ENCODE measurements at regions of chr17 and their contacts with region 1.

Region 1: DNA sequence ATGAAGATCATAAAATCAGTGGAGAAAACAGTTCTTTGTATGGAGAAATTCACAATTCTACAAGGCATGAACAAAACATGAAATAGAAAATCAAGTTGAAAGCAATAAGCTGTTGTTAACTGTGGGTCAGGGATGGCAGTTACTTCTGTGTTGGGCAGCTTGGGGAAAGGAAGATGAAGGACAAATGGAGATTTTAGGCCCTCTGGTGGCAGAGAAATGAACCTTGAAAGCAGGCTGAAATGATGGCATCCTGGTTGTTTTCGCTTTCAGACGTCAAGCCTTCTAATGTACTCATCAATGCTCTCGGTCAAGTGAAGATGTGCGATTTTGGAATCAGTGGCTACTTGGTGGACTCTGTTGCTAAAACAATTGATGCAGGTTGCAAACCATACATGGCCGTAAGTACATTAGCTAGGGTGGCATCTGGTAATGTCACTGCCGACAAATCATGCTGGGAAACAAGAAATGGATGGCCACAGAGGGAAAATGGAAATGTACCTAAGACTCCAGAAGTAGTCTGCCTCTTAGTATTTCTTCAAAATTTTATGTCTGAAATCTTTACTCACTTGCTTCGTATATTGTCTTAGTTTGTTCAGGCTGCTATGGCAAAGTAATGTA is 108.9 kb downstream of the MAP2K6 start:
- DNase-seq: peak; percentile 28
- ATAC-seq: peak; percentile 76
- H3K4me3 ChIP-seq: no peak overlapping the region
- H3K27ac ChIP-seq: no peak overlapping the region
- H3K4me1 ChIP-seq: no peaks in the 10 kb centered on the region
- H3K27me3 ChIP-seq: no peaks in the 10 kb centered on the region
- CTCF ChIP-seq: peak; percentile 52 to 77 (median 73); a peak in 5 of 6 replicates
- POLR2A ChIP-seq: no peak
- RAD21 ChIP-seq: peak; percentile 69

Region 2: DNA sequence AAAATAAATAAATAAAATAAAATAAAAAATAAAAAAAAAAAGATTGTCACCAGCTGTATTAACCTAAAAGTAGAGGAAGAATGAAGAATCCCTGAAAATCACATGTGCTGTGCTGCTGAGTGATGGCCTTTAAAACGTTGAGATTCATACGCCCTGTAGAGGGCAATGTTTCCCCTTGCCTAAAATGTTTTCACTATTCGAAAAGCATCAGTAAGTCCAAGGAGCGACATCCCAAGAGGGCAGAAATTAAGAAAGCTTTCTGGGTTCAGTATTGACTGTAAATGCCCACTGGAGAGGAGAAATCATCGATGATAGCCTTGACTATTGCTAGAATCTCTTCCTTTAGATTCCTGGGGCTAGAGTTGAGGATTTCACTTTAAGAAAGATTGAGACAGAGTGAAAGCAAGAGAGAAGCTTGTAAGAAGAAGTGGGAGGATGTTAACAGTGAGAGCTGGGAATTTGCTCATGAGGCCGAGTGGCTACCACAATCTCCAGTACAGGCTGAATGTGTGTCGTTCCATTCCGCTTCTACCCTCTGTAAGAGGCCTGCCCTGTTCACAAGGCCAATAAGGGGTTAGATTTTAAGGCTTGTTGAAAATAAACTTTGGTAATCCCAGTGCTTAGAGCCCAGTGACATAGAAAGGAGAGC is 751.4 kb before region 1 on chr17:
- CTCF ChIA-PET with region 1: interaction called, 19 read pairs
- POLR2A ChIA-PET with region 1: no interaction called
- RAD21 ChIA-PET with region 1: no interaction called
- intact Hi-C with region 1: loop called (anchors 2 kb)
- DNase-seq: peak; percentile 62
- ATAC-seq: peak; percentile 67
- H3K4me3 ChIP-seq: peak overlapping the region; percentile 4 to 10; a peak in 1 of 4 replicates
- H3K27ac ChIP-seq: no peak overlapping the region
- H3K4me1 ChIP-seq: peaks cover 4 to 9% of the 10 kb centered on the region in 2 experiments; a peak in 3 of 4 replicates
- H3K27me3 ChIP-seq: no peaks in the 10 kb centered on the region
- CTCF ChIP-seq: peak; percentile 65 to 84 (median 78)
- POLR2A ChIP-seq: no peak
- RAD21 ChIP-seq: peak; percentile 77

Region 3: DNA sequence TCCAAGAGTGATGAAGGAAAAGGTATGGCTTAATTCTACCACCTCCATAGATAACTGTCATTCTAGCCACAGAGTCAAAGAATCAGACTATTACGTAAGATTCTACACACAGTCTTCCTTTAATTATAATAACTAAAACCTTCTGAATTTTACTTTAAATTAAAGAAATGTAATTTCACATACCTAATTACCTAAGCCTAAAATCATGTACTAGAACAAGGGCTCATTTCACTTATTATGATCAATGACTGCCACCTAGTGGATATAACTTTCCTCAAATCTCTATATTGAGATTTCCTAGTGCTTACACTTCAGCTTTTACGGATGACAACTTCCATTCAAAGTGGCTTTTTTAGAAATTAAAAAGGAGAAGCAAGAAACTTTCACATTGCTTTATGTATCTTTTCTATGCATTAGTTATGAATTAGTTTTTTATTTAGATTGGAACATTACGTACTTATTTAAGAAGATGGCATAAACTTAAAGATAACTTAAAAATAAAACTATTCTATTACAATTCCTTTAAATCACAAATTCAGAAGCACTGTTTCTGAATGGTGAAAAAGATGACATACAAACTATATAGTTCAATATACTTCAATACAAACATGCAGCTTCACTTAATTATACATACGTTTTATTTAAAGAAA is 276.5 kb before region 1 on chr17:
- CTCF ChIA-PET with region 1: interaction called, 12 read pairs
- POLR2A ChIA-PET with region 1: no interaction called
- RAD21 ChIA-PET with region 1: no interaction called
- intact Hi-C with region 1: loop called (anchors 5 kb)
- DNase-seq: peak; percentile 55
- ATAC-seq: peak; percentile 78
- H3K4me3 ChIP-seq: no peak overlapping the region
- H3K27ac ChIP-seq: no peak overlapping the region
- H3K4me1 ChIP-seq: no peaks in the 10 kb centered on the region
- H3K27me3 ChIP-seq: no peaks in the 10 kb centered on the region
- CTCF ChIP-seq: peak; percentile 53 to 83 (median 65)
- POLR2A ChIP-seq: no peak
- RAD21 ChIP-seq: peak; percentile 79

Region 4: GRCh38 chr17:69388822-69389442 is 134.4 kb before region 1 on chr17:
- CTCF ChIA-PET with region 1: interaction called, 15 read pairs
- POLR2A ChIA-PET with region 1: no interaction called
- RAD21 ChIA-PET with region 1: no interaction called
- intact Hi-C with region 1: no loop called
- DNase-seq: no peak
- ATAC-seq: no peak
- H3K4me3 ChIP-seq: no peak overlapping the region
- H3K27ac ChIP-seq: no peak overlapping the region
- H3K4me1 ChIP-seq: no peaks in the 10 kb centered on the region
- H3K27me3 ChIP-seq: no peaks in the 10 kb centered on the region
- CTCF ChIP-seq: no peak
- POLR2A ChIP-seq: no peak
- RAD21 ChIP-seq: no peak

Region 5: GRCh38 chr17:69499301-69499700 is 24.1 kb before region 1 on chr17:
- CTCF ChIA-PET with region 1: no interaction called
- POLR2A ChIA-PET with region 1: no interaction called
- RAD21 ChIA-PET with region 1: no interaction called
- intact Hi-C with region 1: no loop called
- DNase-seq: no peak
- ATAC-seq: no peak
- H3K4me3 ChIP-seq: no peak overlapping the region
- H3K27ac ChIP-seq: no peak overlapping the region
- H3K4me1 ChIP-seq: no peaks in the 10 kb centered on the region; a peak in 1 of 4 replicates
- H3K27me3 ChIP-seq: no peaks in the 10 kb centered on the region
- CTCF ChIP-seq: no peak
- POLR2A ChIP-seq: no peak
- RAD21 ChIP-seq: no peak

Region 6: GRCh38 chr17:69575346-69575761 is 52.0 kb after region 1 on chr17:
- CTCF ChIA-PET with region 1: interaction called, 18 read pairs
- POLR2A ChIA-PET with region 1: no interaction called
- RAD21 ChIA-PET with region 1: no interaction called
- intact Hi-C with region 1: no loop called
- DNase-seq: no peak
- ATAC-seq: no peak
- H3K4me3 ChIP-seq: no peak overlapping the region
- H3K27ac ChIP-seq: no peak overlapping the region
- H3K4me1 ChIP-seq: no peaks in the 10 kb centered on the region
- H3K27me3 ChIP-seq: peaks cover 8% of the 10 kb centered on the region
- CTCF ChIP-seq: no peak
- POLR2A ChIP-seq: no peak
- RAD21 ChIP-seq: no peak

Region 7: GRCh38 chr17:69696650-69697049 is 173.3 kb after region 1 on chr17:
- CTCF ChIA-PET with region 1: no interaction called
- POLR2A ChIA-PET with region 1: no interaction called
- RAD21 ChIA-PET with region 1: no interaction called
- intact Hi-C with region 1: no loop called
- DNase-seq: no peak
- ATAC-seq: no peak
- H3K4me3 ChIP-seq: no peak overlapping the region
- H3K27ac ChIP-seq: no peak overlapping the region
- H3K4me1 ChIP-seq: no peaks in the 10 kb centered on the region
- H3K27me3 ChIP-seq: no peaks in the 10 kb centered on the region
- CTCF ChIP-seq: no peak
- POLR2A ChIP-seq: no peak
- RAD21 ChIP-seq: no peak

Region 8: GRCh38 chr17:70144260-70144846 is 621.0 kb after region 1 on chr17:
- CTCF ChIA-PET with region 1: interaction called, 11 read pairs
- POLR2A ChIA-PET with region 1: no interaction called
- RAD21 ChIA-PET with region 1: no interaction called
- intact Hi-C with region 1: loop called (anchors 1 kb)
- DNase-seq: peak; percentile 12
- ATAC-seq: 0 out of 2 replicates have a peak, but pooled peaks have one; percentile 46
- H3K4me3 ChIP-seq: no peak overlapping the region
- H3K27ac ChIP-seq: no peak overlapping the region
- H3K4me1 ChIP-seq: no peaks in the 10 kb centered on the region
- H3K27me3 ChIP-seq: no peaks in the 10 kb centered on the region
- CTCF ChIP-seq: peak; percentile 34 to 71 (median 48); a peak in 4 of 6 replicates
- POLR2A ChIP-seq: no peak
- RAD21 ChIP-seq: peak; percentile 52

Region 9: GRCh38 chr17:70622368-70623260 is 1099.3 kb after region 1 on chr17:
- CTCF ChIA-PET with region 1: interaction called, 10 read pairs
- POLR2A ChIA-PET with region 1: no interaction called
- RAD21 ChIA-PET with region 1: no interaction called
- intact Hi-C with region 1: loop called (anchors 1 kb)
- DNase-seq: peak; percentile 38
- ATAC-seq: peak; percentile 86
- H3K4me3 ChIP-seq: no peak overlapping the region
- H3K27ac ChIP-seq: no peak overlapping the region
- H3K4me1 ChIP-seq: no peaks in the 10 kb centered on the region
- H3K27me3 ChIP-seq: no peaks in the 10 kb centered on the region
- CTCF ChIP-seq: peak; percentile 53 to 83 (median 80); a peak in 5 of 6 replicates
- POLR2A ChIP-seq: no peak
- RAD21 ChIP-seq: peak; percentile 73